Cardiac septum (tissue), 1 donor: ENCODE measurements at regions of chr5 and their contacts with region 1.

Region 1: GRCh38 chr5:66807743-66808142 is 211.6 kb downstream of the MAST4 start:
- DNase-seq: no peak

Region 2: GRCh38 chr5:66863243-66864170 is 55.8 kb after region 1 on chr5:
- intact Hi-C with region 1: loop called (anchors 2 kb)
- DNase-seq: no peak